ENCODE measurements at regions of chr11 and their contacts with region 1.

Region 1: DNA sequence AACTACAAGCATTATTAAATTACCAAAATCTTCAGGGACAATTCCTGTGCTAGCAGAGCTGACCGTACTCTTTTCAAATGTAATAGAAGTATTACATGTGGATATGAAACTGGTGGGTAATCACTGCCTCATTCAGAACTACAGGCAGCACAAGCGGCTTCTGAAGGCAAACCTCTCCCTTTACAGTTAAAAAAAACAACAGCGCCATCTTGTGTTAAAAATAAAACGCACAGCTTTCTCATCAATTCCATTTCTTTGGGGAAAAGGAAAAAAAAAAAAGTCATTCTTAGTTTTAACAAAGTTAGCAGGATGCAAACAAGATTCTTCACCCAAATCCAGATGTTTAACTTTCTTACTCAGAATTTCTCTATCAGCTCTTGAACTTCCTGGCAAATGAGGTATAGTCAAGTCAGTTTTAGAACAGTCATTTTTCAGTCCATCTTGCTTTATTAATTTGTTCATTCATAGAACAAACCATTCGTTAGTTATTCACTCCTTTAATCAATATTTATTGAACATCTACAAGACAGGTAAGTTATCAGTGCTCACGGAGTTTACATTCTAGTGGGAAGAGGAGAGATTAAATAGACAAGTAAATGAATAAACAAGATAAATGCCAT is 331.8 kb upstream of the MPPED2 start:
- DNase-seq: no peak
- H3K4me3 ChIP-seq: no peak overlapping the region
- H3K27ac ChIP-seq: no peak overlapping the region
- H3K4me1 ChIP-seq: no peaks in the 10 kb centered on the region
- H3K27me3 ChIP-seq: no peaks in the 10 kb centered on the region
- CTCF ChIP-seq: peak; percentile 43 to 80 (median 58)

Region 2: GRCh38 chr11:29432719-29433325 is 1485.1 kb before region 1 on chr11:
- intact Hi-C with region 1: loop called (anchors 5 kb)
- DNase-seq: no peak
- H3K4me3 ChIP-seq: no peak overlapping the region
- H3K27ac ChIP-seq: no peak overlapping the region
- H3K4me1 ChIP-seq: no peaks in the 10 kb centered on the region
- H3K27me3 ChIP-seq: no peaks in the 10 kb centered on the region
- CTCF ChIP-seq: peak; percentile 4 to 41 (median 27)

Region 3: DNA sequence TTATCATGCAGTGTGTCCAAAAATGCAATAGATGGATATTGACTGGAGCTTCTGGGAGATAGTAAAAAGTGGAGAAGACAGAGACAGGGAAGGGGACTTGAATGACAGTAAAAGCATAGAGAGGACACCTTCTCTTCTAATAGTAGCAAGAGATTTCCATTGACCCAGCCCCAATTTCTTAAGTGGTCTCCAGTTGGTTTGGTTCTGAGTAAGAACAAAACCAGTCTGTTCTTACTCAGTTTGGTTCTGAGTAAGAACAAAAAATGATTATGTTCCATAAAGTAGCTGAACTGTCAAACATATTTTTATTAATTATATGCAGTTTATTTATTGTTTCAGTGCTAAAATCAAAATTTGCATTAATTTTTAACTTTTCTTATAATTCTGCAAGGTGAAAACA is 15.0 kb before region 1 on chr11:
- intact Hi-C with region 1: no loop called
- DNase-seq: no peak
- H3K4me3 ChIP-seq: no peak overlapping the region
- H3K27ac ChIP-seq: no peak overlapping the region
- H3K4me1 ChIP-seq: no peaks in the 10 kb centered on the region
- H3K27me3 ChIP-seq: no peaks in the 10 kb centered on the region
- CTCF ChIP-seq: no peak

Region 4: DNA sequence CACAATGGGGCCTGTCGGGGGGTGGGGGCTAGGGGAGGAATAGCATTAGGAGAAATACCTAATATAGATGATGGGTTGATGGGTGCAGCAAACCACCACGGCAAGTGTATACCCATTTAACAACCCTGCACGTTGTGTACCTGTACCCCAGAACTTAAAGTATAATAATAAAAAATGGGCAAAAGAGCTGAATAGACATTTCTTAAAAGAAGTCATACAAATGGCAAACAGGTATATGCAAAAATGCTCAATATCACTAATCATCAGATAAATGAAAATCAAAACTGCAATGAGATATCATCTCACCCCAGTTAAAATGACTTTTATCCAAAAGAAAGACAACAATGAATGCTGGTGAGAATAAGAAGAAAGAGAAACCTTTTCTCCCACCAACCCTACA is 31.9 kb after region 1 on chr11:
- intact Hi-C with region 1: no loop called
- DNase-seq: no peak
- H3K4me3 ChIP-seq: no peak overlapping the region
- H3K27ac ChIP-seq: no peak overlapping the region
- H3K4me1 ChIP-seq: no peaks in the 10 kb centered on the region
- H3K27me3 ChIP-seq: no peaks in the 10 kb centered on the region
- CTCF ChIP-seq: no peak

Measured in ascending aorta (tissue), 2 donors.